ENCODE measurements at regions of chr1 and their contacts with region 1.

Region 1: DNA sequence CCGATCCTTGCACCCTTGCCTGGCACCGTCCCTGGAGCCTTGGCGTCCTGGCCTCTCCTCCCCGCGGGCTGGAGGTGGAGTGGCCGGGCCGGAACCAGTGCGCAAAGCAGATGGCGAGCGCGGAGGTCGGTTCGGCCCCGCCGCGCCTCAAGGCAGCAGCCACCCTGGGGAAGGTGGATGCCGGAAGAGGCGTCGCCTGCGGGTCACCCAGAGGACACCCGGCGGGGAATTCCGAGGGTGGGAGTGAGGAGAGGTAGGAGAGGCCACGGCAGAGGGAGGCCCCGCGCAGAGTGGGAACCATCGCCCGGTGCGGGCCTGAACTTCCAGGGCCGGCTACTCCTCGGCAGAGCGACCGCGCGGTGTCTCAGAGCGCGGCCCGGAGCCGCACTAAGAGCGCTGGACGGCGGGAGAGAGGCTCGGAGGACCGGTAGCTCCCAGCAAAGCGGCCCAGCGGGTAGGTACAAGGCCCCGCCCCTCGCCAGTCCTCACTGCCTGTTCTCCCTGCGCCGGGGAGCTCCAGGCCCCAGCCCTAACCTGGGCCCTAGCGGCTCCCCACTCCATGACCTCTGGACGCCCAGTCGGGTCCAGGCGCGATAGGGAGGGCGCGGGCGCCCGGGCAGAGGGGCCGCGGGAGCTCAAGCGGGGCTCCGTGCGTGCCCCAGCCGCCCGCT is at the start of gene RNF207:
- DNase-seq: peak; percentile 74 to 75
- ATAC-seq: peak; percentile 59 to 82 (median 72)
- H3K4me3 ChIP-seq: peak within 1 kb of the TSS; percentile 60 to 76 (median 68)
- H3K27ac ChIP-seq: peak within 1 kb of the TSS; percentile 89 to 99 (median 95)
- H3K4me1 ChIP-seq: peaks cover 20 to 68% (median 48%) of the 10 kb centered on the region in 9 donors
- H3K27me3 ChIP-seq: peaks cover 0 to 44% (median 0%) of the 10 kb centered on the region in 7 donors
- CTCF ChIP-seq: no peak
- total RNA-seq, gene RNF207: 30.6 to 101 (median 67.4) TPM

Region 2: DNA sequence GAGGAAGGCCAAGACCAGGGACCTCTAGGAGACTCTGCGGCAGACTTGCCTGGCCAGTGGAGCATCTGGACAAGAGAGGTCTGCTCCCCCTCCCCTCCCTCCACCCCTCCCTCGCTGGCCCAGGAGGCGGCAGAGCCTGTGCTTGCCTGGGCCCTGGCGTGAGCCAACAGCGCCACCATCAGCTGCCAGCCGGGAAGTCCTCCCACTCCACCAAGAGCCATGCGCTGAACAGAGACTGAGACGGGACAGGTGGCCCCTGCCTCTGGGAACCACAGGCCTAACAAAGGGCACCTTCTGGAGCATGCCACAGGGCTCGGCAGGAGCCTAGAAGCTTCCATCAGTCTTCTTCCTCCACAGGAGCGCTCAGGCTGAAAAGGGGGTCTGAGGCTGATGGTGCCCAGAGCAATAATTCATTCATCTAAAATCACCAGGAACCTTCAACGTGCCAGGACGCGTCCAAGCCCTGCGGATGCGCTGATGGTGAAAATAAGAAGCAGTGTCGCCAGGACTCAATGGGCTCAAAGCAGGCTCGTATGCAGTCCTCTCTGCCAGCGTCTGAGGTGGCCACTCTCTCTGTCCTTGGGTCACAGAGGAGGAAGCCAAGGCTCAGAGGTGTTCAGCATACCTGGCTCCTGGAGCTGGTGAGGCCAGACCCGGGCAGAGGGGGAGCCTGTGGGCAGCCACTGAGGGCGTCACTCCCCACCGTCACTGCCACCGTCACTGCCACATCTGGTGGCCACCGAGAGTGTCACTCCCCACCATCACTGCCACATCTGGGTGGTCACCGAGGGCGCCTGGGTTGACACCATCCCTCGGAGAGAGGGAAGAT is 375.0 kb before region 1 on chr1:
- intact Hi-C with region 1: no loop called
- DNase-seq: no peak
- ATAC-seq: no peak
- H3K4me3 ChIP-seq: no peak overlapping the region
- H3K27ac ChIP-seq: no peak overlapping the region
- H3K4me1 ChIP-seq: no peaks in the 10 kb centered on the region
- H3K27me3 ChIP-seq: peaks cover 0 to 55% (median 27%) of the 10 kb centered on the region in 7 donors
- CTCF ChIP-seq: no peak

Region 3: GRCh38 chr1:5992026-5992813 is 213.8 kb before region 1 on chr1 and contains the start of gene NPHP4:
- intact Hi-C with region 1: loop called in 1 of 10 experiments (anchors 5 kb)
- DNase-seq: peak; percentile 99 to 100
- ATAC-seq: peak; percentile 95 to 99 (median 98)
- H3K4me3 ChIP-seq: peak within 1 kb of the TSS; percentile 43 to 92 (median 80)
- H3K27ac ChIP-seq: peak within 1 kb of the TSS; percentile 55 to 96 (median 92)
- H3K4me1 ChIP-seq: peaks cover 6 to 35% (median 19%) of the 10 kb centered on the region in 9 donors
- H3K27me3 ChIP-seq: no peaks in the 10 kb centered on the region
- CTCF ChIP-seq: peak in 4 of 9 donors; percentile 8 to 34 (median 32)
- total RNA-seq, gene NPHP4: 2.4 to 5.7 (median 3.3) TPM

Region 4: DNA sequence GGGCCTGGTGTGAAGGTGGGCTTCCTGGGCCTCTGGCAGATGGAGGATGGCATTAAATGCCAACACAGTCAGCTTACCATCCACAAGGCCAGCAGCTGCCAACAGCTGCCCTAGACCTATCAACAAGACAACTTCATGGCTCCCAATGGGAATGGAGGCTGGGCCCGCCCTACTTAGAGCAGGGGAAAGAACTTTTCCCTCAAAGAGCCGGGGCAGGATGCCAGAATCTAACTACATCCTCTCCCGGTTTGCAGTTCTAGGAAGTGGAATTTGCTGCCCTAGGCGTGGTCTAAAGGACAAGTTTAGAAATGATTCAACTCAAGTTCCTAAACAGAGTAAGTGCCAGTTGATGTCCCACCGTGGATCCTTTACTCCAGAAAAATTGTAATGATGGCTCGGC is 16.7 kb after region 1 on chr1:
- intact Hi-C with region 1: loop called in 1 of 10 experiments (anchors 2 kb)
- DNase-seq: peak; percentile 62 to 91
- ATAC-seq: peak; percentile 65 to 89 (median 84)
- H3K4me3 ChIP-seq: no peak overlapping the region
- H3K27ac ChIP-seq: peak overlapping the region; percentile 21 to 85 (median 72)
- H3K4me1 ChIP-seq: peaks cover 16 to 61% (median 36%) of the 10 kb centered on the region in 9 donors
- H3K27me3 ChIP-seq: no peaks in the 10 kb centered on the region
- CTCF ChIP-seq: no peak

Region 5: GRCh38 chr1:6235296-6235677 is 29.3 kb after region 1 on chr1:
- intact Hi-C with region 1: loop called in 4 of 10 experiments (anchors 5 kb)
- DNase-seq: no peak
- ATAC-seq: peak in 1 of 8 donors; percentile 3
- H3K4me3 ChIP-seq: peak overlapping the region; percentile 50 to 96 (median 82)
- H3K27ac ChIP-seq: peak overlapping the region; percentile 27 to 87 (median 74)
- H3K4me1 ChIP-seq: peaks cover 8 to 45% (median 34%) of the 10 kb centered on the region in 9 donors
- H3K27me3 ChIP-seq: peaks cover under 1 to 21% (median 11%) of the 10 kb centered on the region in 7 donors
- CTCF ChIP-seq: no peak

Measured in heart right ventricle (tissue), 16 donors.